BJ (cell line): ENCODE measurements at regions of chr13 and their contacts with region 1.

Region 1: GRCh38 chr13:45047394-45048310 is 58.3 kb downstream of the GPALPP1 start:
- DNase-seq: no peak
- H3K4me3 ChIP-seq: peak overlapping the region; percentile 50
- H3K27me3 ChIP-seq: no peaks in the 10 kb centered on the region; the same call in 1 of the 2 replicates
- CTCF ChIP-seq: peak; percentile 93

Region 2: DNA sequence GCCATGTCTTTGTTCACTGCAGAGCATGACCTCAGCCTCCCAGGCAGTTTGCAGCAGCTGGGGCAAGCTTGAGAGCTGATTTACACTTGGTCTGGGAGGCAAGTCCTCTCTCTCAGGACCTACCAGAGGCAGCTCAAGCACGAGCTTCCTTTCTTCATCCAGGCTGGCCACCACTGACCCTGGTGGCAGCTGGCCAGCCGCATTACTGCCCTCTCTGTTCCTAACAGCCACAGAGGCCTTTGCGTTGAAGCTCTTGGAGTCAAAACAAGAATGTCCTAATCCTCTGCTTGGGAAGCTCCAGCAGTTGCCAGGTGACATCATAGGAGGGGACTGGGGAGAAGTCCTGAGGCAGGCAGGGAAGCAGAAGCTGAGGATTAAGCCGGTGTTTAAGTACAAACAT is 144.1 kb before region 1 on chr13:
- CTCF ChIA-PET with region 1: no interaction called
- POLR2A ChIA-PET with region 1: no interaction called
- DNase-seq: peak; percentile 79
- H3K4me3 ChIP-seq: no peak overlapping the region
- H3K27me3 ChIP-seq: no peaks in the 10 kb centered on the region
- CTCF ChIP-seq: no peak

Region 3: GRCh38 chr13:44917589-44918325 is 129.9 kb before region 1 on chr13:
- CTCF ChIA-PET with region 1: no interaction called
- POLR2A ChIA-PET with region 1: no interaction called
- DNase-seq: peak; percentile 85
- H3K4me3 ChIP-seq: peak overlapping the region; percentile 39
- H3K27me3 ChIP-seq: no peaks in the 10 kb centered on the region
- CTCF ChIP-seq: peak; percentile 53; the same call in 1 of the 2 replicates

Region 4: DNA sequence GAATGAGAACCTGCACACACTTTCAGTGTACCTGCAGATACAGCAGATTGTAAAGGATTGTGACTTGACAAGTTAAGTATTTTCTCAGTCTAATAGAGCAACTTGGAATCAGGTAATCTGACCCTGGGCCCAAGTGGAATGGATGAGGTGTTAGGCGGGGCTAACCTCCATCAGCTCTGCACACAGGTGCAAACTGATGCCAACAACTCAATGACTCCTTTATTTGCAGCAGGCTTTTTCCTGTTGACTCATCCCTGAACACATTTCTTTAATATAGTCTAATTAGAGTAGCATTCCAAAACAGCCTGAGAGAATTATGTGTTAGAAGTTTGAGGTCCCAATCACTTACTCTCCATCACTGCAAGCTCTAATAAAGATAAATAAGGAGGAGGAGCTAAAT is 244.5 kb after region 1 on chr13:
- CTCF ChIA-PET with region 1: interaction called, 16 read pairs
- POLR2A ChIA-PET with region 1: no interaction called
- DNase-seq: no peak
- H3K4me3 ChIP-seq: no peak overlapping the region
- H3K27me3 ChIP-seq: no peaks in the 10 kb centered on the region
- CTCF ChIP-seq: no peak

Region 5: DNA sequence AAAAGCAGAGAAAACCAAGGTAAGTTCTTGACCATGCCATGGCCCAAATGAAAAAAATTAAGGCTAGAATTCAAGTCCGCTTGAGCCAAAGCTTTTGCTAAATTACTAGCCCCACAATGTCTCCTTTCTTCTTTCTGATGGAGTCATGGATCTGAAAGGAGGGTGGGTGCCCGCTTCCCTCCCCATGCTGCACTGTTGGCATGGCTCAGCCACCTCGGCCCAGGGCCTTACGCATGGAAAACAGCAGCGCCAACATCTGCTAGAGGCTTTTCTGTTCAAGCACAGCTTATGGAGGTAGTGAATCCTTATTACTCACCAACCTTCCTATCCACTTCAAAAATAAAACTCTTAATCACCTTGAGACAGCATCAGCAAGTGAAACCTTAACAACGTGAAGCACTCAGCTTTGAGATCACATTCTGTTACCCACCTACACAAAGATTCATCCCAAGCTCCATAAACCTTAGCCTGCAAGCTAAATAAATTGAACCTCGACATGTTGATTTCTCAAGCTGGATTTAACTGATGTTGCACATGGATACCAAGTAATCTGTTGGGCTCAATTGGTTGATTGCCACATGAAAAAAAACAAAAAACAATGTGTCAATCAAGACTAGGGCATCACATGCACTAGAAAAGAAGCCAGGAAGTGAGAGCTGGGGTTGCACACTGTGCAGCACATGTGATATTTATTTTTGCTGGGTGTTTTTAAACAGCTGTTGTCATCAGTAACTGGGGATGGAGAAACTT is 250.0 kb after region 1 on chr13:
- CTCF ChIA-PET with region 1: interaction called, 21 read pairs
- POLR2A ChIA-PET with region 1: no interaction called
- DNase-seq: no peak
- H3K4me3 ChIP-seq: no peak overlapping the region
- H3K27me3 ChIP-seq: no peaks in the 10 kb centered on the region
- CTCF ChIP-seq: no peak

Region 6: GRCh38 chr13:45310341-45311125 is 262.9 kb after region 1 on chr13:
- CTCF ChIA-PET with region 1: interaction called, 61 read pairs
- POLR2A ChIA-PET with region 1: no interaction called
- DNase-seq: no peak
- H3K4me3 ChIP-seq: no peak overlapping the region; the same call in 1 of the 2 replicates
- H3K27me3 ChIP-seq: no peaks in the 10 kb centered on the region; the same call in 1 of the 2 replicates
- CTCF ChIP-seq: no peak

Region 7: GRCh38 chr13:45337395-45337794 is 289.7 kb after region 1 on chr13:
- CTCF ChIA-PET with region 1: no interaction called
- POLR2A ChIA-PET with region 1: interaction called, 20 read pairs
- DNase-seq: no peak
- H3K4me3 ChIP-seq: no peak overlapping the region
- H3K27me3 ChIP-seq: no peaks in the 10 kb centered on the region
- CTCF ChIP-seq: no peak